GM10248 (cell line): ENCODE measurements at regions of chr4 and their contacts with region 1.

Region 1: DNA sequence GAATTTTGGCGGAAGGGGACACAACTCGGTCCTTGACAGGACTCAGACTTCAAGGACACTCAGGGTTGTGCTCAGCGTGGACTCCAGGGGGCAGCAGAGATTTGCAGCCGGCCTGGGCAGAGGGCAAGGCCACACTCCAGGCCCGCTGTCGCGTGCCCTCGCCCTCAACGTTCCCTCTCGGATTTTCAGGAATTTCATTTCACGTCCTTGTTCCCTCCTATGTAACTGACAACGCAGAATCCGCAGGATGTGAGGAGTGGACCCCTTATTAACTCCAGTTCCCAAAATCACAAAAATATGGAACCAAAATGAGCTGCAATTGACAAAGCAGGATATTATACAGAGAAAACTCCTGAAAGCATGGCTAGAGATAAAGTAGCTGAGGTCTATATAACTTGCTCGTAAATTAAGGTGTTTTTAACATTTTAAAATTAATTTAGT is 21.0 kb upstream of the DCTD start:
- DNase-seq: peak; percentile 77
- CTCF ChIP-seq: peak; percentile 96

Region 2: GRCh38 chr4:182917182-182918043 is 20.8 kb before region 1 on chr4 and contains the start of gene DCTD:
- CTCF ChIA-PET with region 1: interaction called, 82 read pairs
- POLR2A ChIA-PET with region 1: no interaction called
- DNase-seq: peak; percentile 85
- CTCF ChIP-seq: peak; percentile 55

Region 3: DNA sequence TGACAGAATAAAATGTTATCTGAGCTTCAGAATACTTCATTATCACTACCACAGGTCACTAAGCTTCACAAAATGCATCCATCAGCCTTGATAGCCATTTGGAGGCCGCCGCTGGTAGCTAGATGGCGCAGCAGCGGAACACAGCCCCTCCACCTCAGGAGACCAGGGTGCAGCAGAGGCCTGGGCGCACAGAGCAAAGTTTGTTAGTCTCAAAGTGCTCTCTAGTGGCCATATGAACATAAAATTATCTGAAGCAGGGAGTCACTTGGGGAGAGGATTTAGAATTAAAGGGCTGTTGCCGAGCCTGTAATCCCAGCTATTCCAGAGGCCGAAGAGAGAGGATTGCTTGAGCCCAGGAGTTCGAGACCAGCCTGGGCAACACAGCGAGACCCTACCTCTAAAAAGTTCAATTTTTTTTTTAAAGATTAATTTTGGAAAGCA is 12.9 kb before region 1 on chr4:
- CTCF ChIA-PET with region 1: interaction called, 82 read pairs
- POLR2A ChIA-PET with region 1: no interaction called
- DNase-seq: peak; percentile 48
- CTCF ChIP-seq: peak; percentile 90

Region 4: GRCh38 chr4:182955411-182955810 is 17.2 kb after region 1 on chr4:
- CTCF ChIA-PET with region 1: interaction called, 33 read pairs
- POLR2A ChIA-PET with region 1: no interaction called
- DNase-seq: no peak
- CTCF ChIP-seq: no peak

Region 5: GRCh38 chr4:183074296-183074990 is 136.2 kb after region 1 on chr4:
- CTCF ChIA-PET with region 1: interaction called, 15 read pairs
- POLR2A ChIA-PET with region 1: no interaction called
- DNase-seq: no peak
- CTCF ChIP-seq: no peak

Region 6: GRCh38 chr4:183256756-183257385 is 318.6 kb after region 1 on chr4:
- CTCF ChIA-PET with region 1: interaction called, 196 read pairs
- POLR2A ChIA-PET with region 1: no interaction called
- DNase-seq: peak; percentile 50
- CTCF ChIP-seq: peak; percentile 71

Region 7: GRCh38 chr4:183268556-183268955 is 330.3 kb after region 1 on chr4:
- CTCF ChIA-PET with region 1: interaction called, 196 read pairs
- POLR2A ChIA-PET with region 1: no interaction called
- DNase-seq: no peak
- CTCF ChIP-seq: no peak